Colonic mucosa (tissue), 4 donors: ENCODE measurements at regions of chr7 and their contacts with region 1.

Region 1: GRCh38 chr7:37201003-37201875 is 247.4 kb downstream of the ELMO1 start:
- DNase-seq: peak; percentile 79
- H3K4me3 ChIP-seq: no peak overlapping the region
- H3K27ac ChIP-seq: no peak overlapping the region
- H3K4me1 ChIP-seq: peaks cover 3% of the 10 kb centered on the region
- H3K27me3 ChIP-seq: no peaks in the 10 kb centered on the region
- CTCF ChIP-seq: peak; percentile 86

Region 2: GRCh38 chr7:36440880-36441279 is 760.4 kb before region 1 on chr7:
- intact Hi-C with region 1: loop called (anchors 10 kb)
- DNase-seq: no peak
- H3K4me3 ChIP-seq: no peak overlapping the region
- H3K27ac ChIP-seq: no peak overlapping the region
- H3K4me1 ChIP-seq: no peaks in the 10 kb centered on the region
- H3K27me3 ChIP-seq: no peaks in the 10 kb centered on the region
- CTCF ChIP-seq: peak; percentile 29

Region 3: GRCh38 chr7:36473454-36474282 is 727.6 kb before region 1 on chr7:
- intact Hi-C with region 1: loop called (anchors 5 kb)
- DNase-seq: peak; percentile 74
- H3K4me3 ChIP-seq: no peak overlapping the region
- H3K27ac ChIP-seq: no peak overlapping the region
- H3K4me1 ChIP-seq: no peaks in the 10 kb centered on the region
- H3K27me3 ChIP-seq: no peaks in the 10 kb centered on the region
- CTCF ChIP-seq: peak; percentile 43

Region 4: DNA sequence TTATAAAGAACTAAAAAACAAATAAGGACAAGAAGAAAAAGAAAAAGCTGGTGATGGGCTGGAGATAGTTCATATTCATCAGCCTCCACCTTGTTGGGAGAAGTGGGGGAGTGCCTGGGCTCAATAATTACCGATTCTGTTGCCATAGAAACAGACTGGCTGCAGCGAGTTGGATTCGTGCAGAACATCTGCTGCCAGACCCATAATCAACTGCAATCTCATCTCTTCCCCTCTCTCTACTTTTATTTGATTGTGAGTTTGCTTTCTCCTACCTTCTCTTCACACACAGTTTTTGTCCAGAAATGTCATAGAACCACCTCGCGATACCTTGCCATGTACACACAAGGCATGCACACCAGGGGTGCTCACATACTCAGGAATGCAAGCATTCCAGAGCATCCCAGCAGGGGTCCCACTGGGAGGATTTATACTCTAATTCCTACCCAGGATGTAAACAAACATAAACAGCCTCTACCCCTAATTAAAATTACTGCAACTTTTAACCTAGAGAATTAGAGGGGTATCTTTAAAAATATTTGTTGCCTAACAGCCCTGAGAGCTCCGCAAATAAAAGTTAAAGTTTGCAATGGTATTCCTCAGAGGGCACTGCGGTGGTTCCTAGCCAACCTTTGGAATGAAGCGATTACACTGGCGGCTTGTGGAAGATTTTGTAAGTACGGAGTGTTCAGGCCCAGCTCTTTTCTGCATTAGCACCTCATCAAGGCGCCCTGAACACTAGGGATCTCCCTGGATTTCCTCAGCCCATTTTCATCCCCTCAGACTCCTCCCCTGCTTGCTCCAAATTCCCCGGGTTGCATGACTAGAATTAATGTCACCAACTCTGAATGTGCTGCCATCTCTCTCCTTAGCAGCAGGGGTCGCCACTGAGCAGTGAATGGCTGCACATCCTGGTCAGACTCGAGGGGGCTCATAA is 214.5 kb before region 1 on chr7:
- intact Hi-C with region 1: no loop called
- DNase-seq: peak; percentile 67
- H3K4me3 ChIP-seq: no peak overlapping the region
- H3K27ac ChIP-seq: no peak overlapping the region
- H3K4me1 ChIP-seq: no peaks in the 10 kb centered on the region
- H3K27me3 ChIP-seq: no peaks in the 10 kb centered on the region
- CTCF ChIP-seq: peak; percentile 56

Region 5: GRCh38 chr7:37410305-37411229 is 209.3 kb after region 1 on chr7:
- intact Hi-C with region 1: no loop called
- DNase-seq: no peak
- H3K4me3 ChIP-seq: no peak overlapping the region
- H3K27ac ChIP-seq: no peak overlapping the region
- H3K4me1 ChIP-seq: no peaks in the 10 kb centered on the region
- H3K27me3 ChIP-seq: no peaks in the 10 kb centered on the region
- CTCF ChIP-seq: no peak